ENCODE measurements at regions of chr20 and their contacts with region 1.

Region 1: GRCh38 chr20:33731693-33732165 is at the start of gene ZNF341:
- DNase-seq: peak; percentile 97
- H3K4me3 Mint-ChIP-seq: peak within 1 kb of the TSS; percentile 88
- H3K27ac Mint-ChIP-seq: peak within 1 kb of the TSS; percentile 96
- H3K4me1 Mint-ChIP-seq: peaks cover 27% of the 10 kb centered on the region
- H3K27me3 Mint-ChIP-seq: no peaks in the 10 kb centered on the region
- total RNA-seq, gene ZNF341: 6.1 and 7.1 TPM in 2 replicates

Region 2: DNA sequence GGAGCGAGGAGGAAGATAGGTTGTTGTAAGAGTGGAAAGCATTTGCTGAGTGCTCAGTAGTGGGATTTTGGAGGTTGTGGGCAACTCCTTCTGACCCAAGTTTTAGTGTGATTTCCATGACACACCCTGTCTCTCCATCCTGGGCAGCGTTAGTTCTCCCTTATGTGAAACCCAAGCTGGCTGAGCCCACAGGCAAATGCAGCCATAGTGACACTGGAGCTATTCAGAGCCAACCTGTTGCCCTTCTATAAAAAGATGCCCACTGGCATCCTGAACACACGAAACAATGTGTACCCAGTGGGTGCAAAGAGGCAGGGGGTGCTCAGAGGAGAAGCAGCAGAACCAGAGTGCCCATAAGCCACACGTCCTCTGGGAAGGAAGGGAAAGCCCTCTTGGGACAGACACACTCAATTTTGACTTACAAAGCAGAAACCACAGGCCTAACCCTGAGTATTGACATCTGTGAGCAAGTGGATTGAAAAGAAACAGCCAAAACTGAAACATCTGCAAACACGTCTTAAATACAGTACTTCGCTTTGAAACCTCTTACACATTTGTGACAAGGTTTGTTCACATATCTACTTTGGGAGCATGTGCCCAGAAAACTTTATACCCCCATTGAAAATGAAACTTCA is 394.1 kb before region 1 on chr20:
- intact Hi-C with region 1: no loop called
- DNase-seq: no peak
- H3K4me3 Mint-ChIP-seq: no peak overlapping the region
- H3K27ac Mint-ChIP-seq: no peak overlapping the region
- H3K4me1 Mint-ChIP-seq: peaks cover 4% of the 10 kb centered on the region
- H3K27me3 Mint-ChIP-seq: peaks cover 3% of the 10 kb centered on the region

Region 3: DNA sequence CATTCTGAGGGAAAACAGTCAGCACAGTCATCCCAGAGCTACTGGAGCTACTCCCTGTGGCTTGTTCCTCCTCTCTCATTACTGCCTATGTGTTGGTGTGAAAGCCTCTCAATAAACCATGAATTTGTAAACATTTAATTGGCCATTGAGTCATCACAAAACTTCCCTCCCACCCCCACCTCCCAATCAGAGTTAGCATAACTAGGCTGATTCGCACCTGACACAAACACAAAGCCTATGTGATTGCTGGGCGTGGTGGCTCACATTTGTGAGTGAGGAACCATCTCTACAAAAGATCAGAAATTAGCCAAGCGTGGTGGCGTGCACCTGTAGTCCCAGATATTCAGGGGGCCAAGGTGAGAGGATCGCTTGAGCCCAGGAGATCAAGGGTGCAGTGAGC is 271.0 kb before region 1 on chr20:
- intact Hi-C with region 1: loop called (anchors 1 kb)
- DNase-seq: no peak
- H3K4me3 Mint-ChIP-seq: no peak overlapping the region
- H3K27ac Mint-ChIP-seq: no peak overlapping the region
- H3K4me1 Mint-ChIP-seq: peaks cover 3% of the 10 kb centered on the region
- H3K27me3 Mint-ChIP-seq: no peaks in the 10 kb centered on the region

Region 4: DNA sequence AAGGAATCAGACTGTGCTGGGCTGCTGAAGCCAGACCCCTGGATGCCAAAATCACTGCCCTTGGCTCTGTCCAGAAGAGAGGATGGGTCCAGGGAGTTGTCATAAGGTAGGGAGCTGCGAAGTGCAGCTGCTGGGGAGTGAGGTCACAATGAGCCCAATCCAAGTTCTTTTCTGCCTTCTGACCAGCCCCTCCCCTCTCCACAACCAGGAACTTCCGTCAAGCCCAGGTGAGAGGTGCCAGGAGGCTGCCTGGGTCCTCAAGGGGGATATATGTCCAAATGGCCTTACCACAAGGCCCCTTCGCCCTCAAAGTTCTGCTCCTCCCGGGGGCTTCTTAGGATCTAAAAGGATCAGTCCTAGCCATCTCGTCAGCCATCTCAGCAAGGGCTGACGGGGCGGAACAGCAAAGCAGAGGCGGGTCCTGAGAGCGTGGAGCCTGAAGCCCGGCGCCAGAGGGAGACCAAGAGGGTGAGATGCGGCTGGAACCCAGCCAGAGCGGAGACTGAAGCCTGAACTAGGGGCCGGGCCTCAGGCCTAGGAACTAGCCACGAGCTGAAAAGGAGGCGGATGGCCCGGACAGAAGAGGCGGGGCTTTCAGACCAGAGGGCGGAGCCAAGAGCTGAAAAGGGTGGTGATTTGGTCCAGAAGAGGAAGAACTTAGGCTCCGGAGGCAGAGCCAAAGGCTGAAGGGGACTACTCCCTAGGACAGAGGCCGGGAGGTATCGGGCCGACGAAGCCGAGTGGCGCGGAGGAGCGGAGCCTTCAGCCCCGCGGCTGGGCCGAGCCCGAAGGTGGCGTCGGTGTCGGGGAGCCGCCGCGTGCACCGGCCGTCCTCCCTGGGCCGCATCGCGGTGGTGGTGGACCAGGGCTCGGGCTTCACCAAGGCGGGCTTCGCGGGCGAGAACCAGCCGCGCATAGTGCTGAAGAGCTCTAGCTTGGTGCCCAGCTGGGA is 65.2 kb before region 1 on chr20 and contains the start of gene ACTL10:
- intact Hi-C with region 1: loop called (anchors 2 kb)
- DNase-seq: peak; percentile 96
- H3K4me3 Mint-ChIP-seq: peak within 1 kb of the TSS; percentile 96
- H3K27ac Mint-ChIP-seq: peak within 1 kb of the TSS; percentile 98
- H3K4me1 Mint-ChIP-seq: peaks cover 36% of the 10 kb centered on the region
- H3K27me3 Mint-ChIP-seq: no peaks in the 10 kb centered on the region
- total RNA-seq, gene ACTL10: 3.7 TPM in 2 replicates

Region 5: DNA sequence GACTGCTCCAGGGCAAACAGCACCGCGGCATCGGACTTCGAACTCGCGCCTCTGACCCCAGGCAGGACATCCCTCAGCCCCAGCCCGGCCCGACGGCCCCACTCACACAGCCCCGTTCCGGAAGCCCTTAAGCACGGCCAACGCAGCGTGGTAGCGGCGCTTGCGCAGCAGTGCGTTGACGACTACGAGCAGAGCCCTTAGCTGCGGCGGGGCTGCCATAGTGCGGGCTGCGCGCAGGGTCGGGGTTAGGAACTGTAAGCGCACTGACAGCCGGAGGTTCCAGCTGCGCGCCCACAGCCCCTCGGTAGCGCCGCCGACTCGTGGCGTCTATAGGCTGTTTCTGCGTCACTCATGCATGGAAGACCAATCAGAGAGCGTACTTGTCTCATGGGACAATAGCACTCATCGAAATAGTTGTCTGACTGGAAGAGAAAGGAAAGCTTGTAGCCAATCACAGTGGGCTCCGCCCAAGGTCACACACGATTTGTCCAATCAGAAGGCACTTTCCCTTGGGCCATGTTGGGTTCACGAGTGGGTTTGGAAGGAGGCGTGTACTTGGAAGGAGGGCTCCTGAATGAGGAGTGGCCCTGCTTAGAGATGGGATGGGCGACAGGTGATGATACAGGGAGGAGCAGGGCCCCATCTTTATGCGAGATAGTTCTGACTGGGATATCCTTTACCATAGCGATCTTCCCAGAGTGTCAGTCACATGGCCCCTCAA is 11.6 kb before region 1 on chr20 and contains the start of gene PXMP4:
- intact Hi-C with region 1: loop called (anchors 1 kb)
- DNase-seq: peak; percentile 97
- H3K4me3 Mint-ChIP-seq: peak within 1 kb of the TSS; percentile 79
- H3K27ac Mint-ChIP-seq: peak within 1 kb of the TSS; percentile 83
- H3K4me1 Mint-ChIP-seq: peaks cover 23% of the 10 kb centered on the region
- H3K27me3 Mint-ChIP-seq: no peaks in the 10 kb centered on the region
- total RNA-seq, gene PXMP4: 5.4 and 5.5 TPM in 2 replicates

Region 6: GRCh38 chr20:33773412-33774089 is 41.8 kb after region 1 on chr20:
- intact Hi-C with region 1: loop called (anchors 2 kb)
- DNase-seq: peak; percentile 60
- H3K4me3 Mint-ChIP-seq: no peak overlapping the region
- H3K27ac Mint-ChIP-seq: no peak overlapping the region
- H3K4me1 Mint-ChIP-seq: peaks cover 14% of the 10 kb centered on the region
- H3K27me3 Mint-ChIP-seq: no peaks in the 10 kb centered on the region

Region 7: GRCh38 chr20:33810885-33811777 is 79.4 kb after region 1 on chr20 and contains the start of gene CHMP4B:
- intact Hi-C with region 1: loop called (anchors 2 kb)
- DNase-seq: peak; percentile 100
- H3K4me3 Mint-ChIP-seq: peak within 1 kb of the TSS; percentile 99
- H3K27ac Mint-ChIP-seq: peak within 1 kb of the TSS; percentile 98
- H3K4me1 Mint-ChIP-seq: peaks cover 34% of the 10 kb centered on the region
- H3K27me3 Mint-ChIP-seq: peaks cover 2% of the 10 kb centered on the region
- total RNA-seq, gene CHMP4B: 95.6 and 102 TPM in 2 replicates

Region 8: GRCh38 chr20:33992923-33993575 is 261.3 kb after region 1 on chr20:
- intact Hi-C with region 1: loop called (anchors 2 kb)
- DNase-seq: peak; percentile 100
- H3K4me3 Mint-ChIP-seq: peak overlapping the region; percentile 83
- H3K27ac Mint-ChIP-seq: peak overlapping the region; percentile 96
- H3K4me1 Mint-ChIP-seq: peaks cover 48% of the 10 kb centered on the region
- H3K27me3 Mint-ChIP-seq: no peaks in the 10 kb centered on the region

Region 9: DNA sequence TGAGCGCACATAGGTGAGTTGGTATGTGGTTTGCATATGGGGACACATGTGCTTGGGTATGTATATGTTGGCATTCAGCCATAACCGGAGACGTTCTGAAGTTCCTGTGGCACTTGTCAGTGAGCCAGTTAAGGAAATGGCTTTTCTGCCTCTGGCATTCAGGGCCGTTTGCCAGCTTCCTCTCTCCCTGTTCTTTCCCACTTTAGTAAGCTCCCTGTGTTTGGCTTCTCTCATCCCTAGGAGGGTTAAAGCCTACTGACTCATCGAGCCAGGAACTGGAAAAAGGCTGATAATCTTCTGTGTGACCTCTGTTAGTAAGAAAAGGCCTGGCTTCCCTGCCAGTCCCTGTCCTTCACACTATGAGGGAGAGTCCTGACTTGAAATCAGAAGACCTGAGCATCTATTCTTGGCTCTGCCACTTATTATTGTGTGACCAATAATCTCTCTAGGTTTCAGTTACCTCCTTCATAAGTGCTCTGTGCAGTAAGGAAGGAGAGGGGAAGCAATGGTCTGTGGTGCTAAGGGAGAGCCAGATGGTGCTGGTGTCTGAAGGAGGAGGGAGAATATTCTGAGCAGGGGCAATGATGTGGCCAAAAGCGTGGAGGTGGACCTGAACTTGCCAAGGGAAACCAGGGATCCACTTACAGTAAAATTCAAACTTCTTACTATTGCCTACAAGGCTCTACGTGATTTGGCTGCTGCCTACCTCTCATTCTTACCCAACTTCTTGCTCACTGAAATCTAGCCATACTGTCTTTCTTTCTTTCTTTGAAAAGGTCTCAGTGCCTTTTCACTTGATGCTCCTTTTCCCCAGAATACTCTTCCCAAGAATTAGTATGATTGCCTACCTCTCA is 1176.1 kb after region 1 on chr20:
- intact Hi-C with region 1: no loop called
- DNase-seq: no peak
- H3K4me3 Mint-ChIP-seq: no peak overlapping the region
- H3K27ac Mint-ChIP-seq: peak overlapping the region; percentile 76
- H3K4me1 Mint-ChIP-seq: peaks cover 11% of the 10 kb centered on the region
- H3K27me3 Mint-ChIP-seq: no peaks in the 10 kb centered on the region